ENCODE measurements at regions of chr1 and their contacts with region 1.

Region 1: GRCh38 chr1:156659994-156660751 is 17.0 kb downstream of the NES start:
- DNase-seq: peak; percentile 97
- H3K4me3 ChIP-seq: peak overlapping the region in 1 of 2 donors; percentile 23
- H3K27ac ChIP-seq: peak overlapping the region; percentile 68 to 69
- H3K4me1 ChIP-seq: peaks cover 72% of the 10 kb centered on the region
- H3K27me3 ChIP-seq: no peaks in the 10 kb centered on the region
- CTCF ChIP-seq: peak; percentile 99
- POLR2A ChIP-seq: no peak

Region 2: DNA sequence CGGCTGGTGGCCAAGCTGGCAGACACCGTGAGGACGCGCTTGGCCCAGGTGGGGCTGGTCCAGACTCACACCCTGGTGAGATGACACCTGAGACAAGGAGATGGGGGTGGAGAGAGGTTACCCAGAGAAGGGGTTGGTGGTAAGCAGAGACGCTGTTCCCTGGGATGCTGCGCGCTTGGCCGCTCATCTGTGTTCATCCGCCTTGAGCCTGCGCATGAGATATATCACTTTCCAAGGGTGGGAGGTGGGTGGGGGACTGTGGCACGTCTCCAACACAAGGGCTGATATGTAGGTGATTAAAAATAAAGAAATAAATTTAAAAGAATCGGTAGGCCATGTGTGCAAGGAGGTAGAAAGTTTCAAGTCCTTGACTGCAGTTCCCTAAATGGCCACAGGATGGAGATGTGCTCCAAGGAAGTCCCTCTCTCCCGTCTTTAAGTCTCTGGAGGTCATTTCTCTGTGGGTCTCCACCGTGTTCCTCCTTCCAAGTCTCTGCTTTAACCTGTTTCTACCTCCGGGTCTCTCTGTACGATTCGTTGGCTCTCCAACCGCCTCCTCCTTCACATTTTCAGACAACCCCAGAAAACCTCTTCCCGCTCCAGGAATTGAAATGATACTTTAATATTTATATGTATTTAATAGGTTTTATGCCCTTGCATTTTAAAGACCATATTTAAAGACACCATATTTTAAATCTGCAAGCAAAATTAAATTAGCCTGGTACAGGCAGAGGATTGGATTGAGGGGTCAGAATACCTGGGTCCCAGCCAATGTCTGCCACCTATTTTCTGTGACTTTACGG is 76.2 kb before region 1 on chr1:
- intact Hi-C with region 1: loop called (anchors 10 kb)
- DNase-seq: peak; percentile 93
- H3K4me3 ChIP-seq: no peak overlapping the region
- H3K27ac ChIP-seq: no peak overlapping the region
- H3K4me1 ChIP-seq: peaks cover 1% of the 10 kb centered on the region
- H3K27me3 ChIP-seq: no peaks in the 10 kb centered on the region
- CTCF ChIP-seq: peak; percentile 86 to 97 (median 90)
- POLR2A ChIP-seq: no peak

Region 3: DNA sequence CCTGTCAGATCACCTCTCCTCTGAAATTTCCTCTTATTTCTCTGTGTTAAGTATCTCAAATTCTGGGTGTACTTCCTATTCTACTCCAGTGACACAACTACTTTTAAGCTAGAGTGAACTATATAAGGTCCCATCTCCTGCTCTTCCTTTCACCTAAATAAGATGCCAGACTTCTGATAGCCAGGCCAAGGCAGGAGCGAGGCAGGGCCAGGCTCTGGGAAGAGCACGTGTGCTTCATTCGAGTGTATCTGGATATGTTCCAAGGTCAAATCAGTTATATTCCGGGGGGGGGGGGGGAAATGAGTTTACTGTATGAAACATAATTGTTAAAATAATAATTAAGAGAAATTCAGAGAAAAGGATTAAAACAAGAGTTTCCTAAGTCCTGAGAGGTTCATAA is 320.4 kb after region 1 on chr1:
- intact Hi-C with region 1: no loop called
- DNase-seq: no peak
- H3K4me3 ChIP-seq: no peak overlapping the region
- H3K27ac ChIP-seq: no peak overlapping the region
- H3K4me1 ChIP-seq: no peaks in the 10 kb centered on the region
- H3K27me3 ChIP-seq: no peaks in the 10 kb centered on the region
- CTCF ChIP-seq: no peak
- POLR2A ChIP-seq: no peak